Naive thymus-derived CD8-positive, alpha-beta T cell (primary cell): ENCODE measurements at regions of chr2 and their contacts with region 1.

Region 1: GRCh38 chr2:65227425-65228262 is at the start of gene ACTR2:
- DNase-seq: peak; percentile 86 to 96 (median 93)
- ATAC-seq: peak; percentile 95
- H3K4me3 Mint-ChIP-seq: peak within 1 kb of the TSS; percentile 96 to 100 (median 99)
- H3K27ac Mint-ChIP-seq: peak within 1 kb of the TSS; percentile 98 to 100 (median 99)
- H3K4me1 Mint-ChIP-seq: peaks cover 11 to 57% (median 34%) of the 10 kb centered on the region in 4 donors
- H3K27me3 Mint-ChIP-seq: no peaks in the 10 kb centered on the region
- polyA plus RNA-seq, gene ACTR2: 238 to 280 (median 242) TPM

Region 2: DNA sequence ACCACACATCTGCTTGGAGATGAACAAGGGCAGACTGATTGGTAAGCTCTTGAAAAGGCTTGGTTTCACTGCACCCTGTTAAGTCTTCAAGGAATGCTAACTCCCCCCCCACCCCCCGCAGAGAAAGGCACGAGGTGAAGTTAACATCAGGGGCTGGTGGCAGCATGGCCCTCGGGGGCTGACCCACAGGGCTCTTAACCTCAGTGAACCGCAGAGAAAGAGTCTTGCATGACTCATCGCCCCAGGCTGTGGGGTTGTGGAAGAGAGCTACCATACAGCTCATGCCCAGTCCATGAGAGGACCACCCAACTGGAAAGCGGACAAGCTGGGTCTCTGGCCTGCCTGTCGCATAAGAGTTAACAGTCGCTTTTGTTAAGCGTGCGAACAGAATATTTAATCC is 182.0 kb before region 1 on chr2:
- POLR2A ChIA-PET with region 1: no interaction called
- DNase-seq: no peak
- ATAC-seq: no peak
- H3K4me3 Mint-ChIP-seq: no peak overlapping the region
- H3K27ac Mint-ChIP-seq: no peak overlapping the region
- H3K4me1 Mint-ChIP-seq: peaks cover 0 to 3% (median 1%) of the 10 kb centered on the region in 4 donors
- H3K27me3 Mint-ChIP-seq: no peaks in the 10 kb centered on the region

Region 3: DNA sequence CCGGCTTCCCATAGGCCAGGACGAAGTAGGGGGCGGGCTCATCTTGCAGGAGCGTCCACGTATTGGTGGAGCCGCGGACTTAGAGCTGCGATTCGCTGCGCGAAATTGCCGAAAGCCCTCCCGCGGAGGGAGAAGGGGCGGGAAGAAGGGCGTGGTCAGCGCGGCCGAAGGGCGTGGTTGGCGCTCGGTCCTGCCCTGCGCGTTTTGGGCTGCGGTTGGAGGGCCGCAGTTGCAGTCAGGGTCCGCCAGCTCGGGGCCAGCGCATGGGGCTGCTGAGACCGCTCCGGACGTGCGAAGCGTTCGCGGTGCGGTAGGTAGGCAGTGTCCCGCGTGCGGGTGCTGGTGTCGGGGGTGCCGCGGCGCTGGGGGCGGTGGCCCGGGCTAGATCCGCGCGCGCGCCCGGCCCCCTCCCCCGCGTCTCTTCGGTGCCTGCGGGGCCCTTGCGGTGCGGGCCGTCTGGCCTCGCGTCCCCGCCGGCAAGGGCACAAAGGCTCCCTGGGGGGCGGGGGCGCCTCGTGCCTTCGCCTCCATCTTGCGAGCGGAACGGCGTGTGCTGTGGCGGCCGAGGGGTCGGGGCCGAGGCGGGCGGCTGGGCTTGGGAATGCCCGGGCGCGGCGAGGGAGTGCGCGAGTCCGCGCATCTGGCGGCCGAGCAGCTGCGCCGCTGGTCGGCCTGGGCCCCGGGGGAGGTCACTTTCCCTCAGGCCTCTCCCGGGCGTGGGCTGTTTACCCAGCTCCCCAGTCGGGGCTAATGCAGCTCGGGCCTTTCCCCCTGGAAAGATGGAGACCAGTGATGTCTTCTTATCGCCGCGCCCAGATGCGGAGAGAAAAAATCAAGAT is 171.2 kb before region 1 on chr2 and contains the start of gene CEP68:
- POLR2A ChIA-PET with region 1: interaction called, 18 read pairs
- DNase-seq: peak; percentile 87 to 97 (median 95)
- ATAC-seq: peak; percentile 86 to 87
- H3K4me3 Mint-ChIP-seq: peak within 1 kb of the TSS; percentile 81 to 100 (median 98)
- H3K27ac Mint-ChIP-seq: peak within 1 kb of the TSS; percentile 82 to 99 (median 97)
- H3K4me1 Mint-ChIP-seq: peaks cover 34 to 86% (median 78%) of the 10 kb centered on the region in 4 donors
- H3K27me3 Mint-ChIP-seq: no peaks in the 10 kb centered on the region
- polyA plus RNA-seq, gene CEP68: 26.6 to 39.1 (median 34.7) TPM

Region 4: GRCh38 chr2:65129826-65130663 is 97.6 kb before region 1 on chr2 and contains the start of gene RAB1A:
- POLR2A ChIA-PET with region 1: interaction called, 41 read pairs
- DNase-seq: peak; percentile 90 to 100 (median 98)
- ATAC-seq: peak; percentile 94
- H3K4me3 Mint-ChIP-seq: peak within 1 kb of the TSS; percentile 97 to 100 (median 99)
- H3K27ac Mint-ChIP-seq: peak within 1 kb of the TSS; percentile 95 to 100 (median 99)
- H3K4me1 Mint-ChIP-seq: peaks cover 16 to 44% (median 34%) of the 10 kb centered on the region in 4 donors
- H3K27me3 Mint-ChIP-seq: no peaks in the 10 kb centered on the region
- polyA plus RNA-seq, gene RAB1A: 38.8 to 45.4 (median 41.7) TPM

Region 5: GRCh38 chr2:65300761-65301711 is 73.4 kb after region 1 on chr2:
- POLR2A ChIA-PET with region 1: interaction called, 20 read pairs
- DNase-seq: peak; percentile 47 to 87 (median 75)
- ATAC-seq: peak; percentile 89 to 95
- H3K4me3 Mint-ChIP-seq: peak overlapping the region; percentile 75 to 93 (median 82)
- H3K27ac Mint-ChIP-seq: peak overlapping the region; percentile 78 to 98 (median 94)
- H3K4me1 Mint-ChIP-seq: peaks cover 19 to 39% (median 34%) of the 10 kb centered on the region in 4 donors
- H3K27me3 Mint-ChIP-seq: peaks cover 3 to 11% (median 6%) of the 10 kb centered on the region in 5 donors